PC-9 (cell line): ENCODE measurements at regions of chr5 and their contacts with region 1.

Region 1: DNA sequence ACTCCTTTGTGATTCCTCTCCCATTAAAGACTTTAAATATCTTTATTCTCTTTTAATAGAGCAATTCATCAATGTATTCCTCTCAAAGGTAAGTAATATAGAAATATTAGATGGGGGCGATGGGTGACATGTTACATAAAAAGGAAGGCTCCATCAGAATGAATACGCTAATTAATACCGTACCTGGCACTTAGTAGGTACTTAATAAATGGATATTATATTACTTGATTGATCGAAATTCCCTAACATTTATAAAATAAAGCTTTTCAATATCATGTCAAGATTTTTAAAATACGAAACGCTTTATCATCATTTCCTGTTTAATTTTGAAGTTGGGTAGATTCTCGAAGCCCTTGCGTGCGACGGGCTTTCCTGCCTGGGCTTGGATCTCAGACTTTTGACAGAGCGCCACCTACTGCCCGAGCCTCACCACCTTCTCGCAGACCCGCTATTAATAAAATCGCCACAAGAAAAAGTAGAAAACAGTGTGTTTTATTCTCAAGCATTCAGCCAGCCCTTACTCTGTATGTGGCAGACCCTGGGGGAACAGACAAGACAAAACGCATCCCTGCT is 99.4 kb downstream of the C5orf15 start:
- DNase-seq: peak in 1 of 2 experiments; percentile 50
- H3K4me3 ChIP-seq: no peak overlapping the region
- H3K27ac ChIP-seq: no peak overlapping the region
- H3K4me1 ChIP-seq: peaks cover 14% of the 10 kb centered on the region
- H3K27me3 ChIP-seq: no peaks in the 10 kb centered on the region
- CTCF ChIP-seq: peak; percentile 42

Region 2: DNA sequence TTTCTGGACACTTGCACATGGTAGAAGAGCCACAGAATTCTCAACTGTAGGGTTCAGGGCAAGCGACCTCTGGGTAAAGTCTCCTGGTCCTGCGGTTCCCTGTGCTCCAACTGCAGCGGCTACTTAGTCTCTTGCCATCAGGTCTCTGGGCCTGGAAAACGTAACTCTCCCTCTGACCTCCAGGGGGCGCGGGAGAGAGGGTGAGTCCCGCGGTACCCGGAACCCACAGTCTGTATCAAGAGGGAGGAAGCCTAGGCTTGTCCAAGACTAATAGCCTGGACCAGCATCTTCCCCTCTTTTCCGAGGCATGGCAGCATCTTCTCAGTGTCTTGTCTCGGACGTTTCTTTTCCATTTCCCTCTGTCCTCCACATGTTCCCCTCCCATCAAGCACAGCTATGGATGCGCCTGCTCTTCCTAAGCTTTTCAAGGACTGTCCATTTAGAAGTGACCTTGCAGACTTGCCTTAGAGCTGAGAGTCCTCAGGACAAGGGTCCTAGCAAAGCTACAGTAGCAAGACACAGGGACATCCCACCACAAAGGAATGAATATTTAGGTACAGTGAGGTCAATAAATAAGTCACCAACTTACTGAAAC is 316.0 kb before region 1 on chr5:
- CTCF ChIA-PET with region 1: no interaction called
- POLR2A ChIA-PET with region 1: no interaction called
- intact Hi-C with region 1: loop called (anchors 2 kb)
- DNase-seq: peak in 1 of 2 experiments; percentile 24
- H3K4me3 ChIP-seq: no peak overlapping the region
- H3K27ac ChIP-seq: no peak overlapping the region
- H3K4me1 ChIP-seq: no peaks in the 10 kb centered on the region
- H3K27me3 ChIP-seq: no peaks in the 10 kb centered on the region
- CTCF ChIP-seq: peak; percentile 80